Mammary epithelial cell (primary cell): ENCODE measurements at regions of chr12 and their contacts with region 1.

Region 1: GRCh38 chr12:55829967-55830600 is 697 bp upstream of the DNAJC14 start:
- DNase-seq: no peak
- H3K4me3 ChIP-seq: peak overlapping the region; percentile 81 to 88 (median 83)
- H3K27ac ChIP-seq: peak overlapping the region; percentile 75
- H3K4me1 ChIP-seq: peaks cover 8% of the 10 kb centered on the region
- H3K27me3 ChIP-seq: no peaks in the 10 kb centered on the region
- CTCF ChIP-seq: no peak

Region 2: GRCh38 chr12:55607821-55608594 is 222.1 kb before region 1 on chr12:
- CTCF ChIA-PET with region 1: no interaction called
- dilution Hi-C with region 1: no loop called
- in situ Hi-C with region 1: no loop called
- intact Hi-C with region 1: no loop called
- DNase-seq: peak; percentile 77
- H3K4me3 ChIP-seq: no peak overlapping the region
- H3K27ac ChIP-seq: no peak overlapping the region
- H3K4me1 ChIP-seq: peaks cover 9% of the 10 kb centered on the region
- H3K27me3 ChIP-seq: no peaks in the 10 kb centered on the region
- CTCF ChIP-seq: no peak

Region 3: GRCh38 chr12:55847603-55848291 is 17.7 kb after region 1 on chr12:
- CTCF ChIA-PET with region 1: no interaction called
- dilution Hi-C with region 1: no loop called
- in situ Hi-C with region 1: no loop called
- intact Hi-C with region 1: loop called (anchors 2 kb)
- DNase-seq: peak; percentile 91
- H3K4me3 ChIP-seq: no peak overlapping the region
- H3K27ac ChIP-seq: peak overlapping the region; percentile 99
- H3K4me1 ChIP-seq: peaks cover 22% of the 10 kb centered on the region
- H3K27me3 ChIP-seq: no peaks in the 10 kb centered on the region
- CTCF ChIP-seq: no peak